ENCODE measurements at regions of chr11 and their contacts with region 1.

Region 1: GRCh38 chr11:1832211-1832919 is 2.4 kb upstream of the SYT8 start:
- DNase-seq: peak; percentile 76
- ATAC-seq: peak; percentile 77
- H3K4me3 ChIP-seq: no peak overlapping the region
- H3K4me3 Mint-ChIP-seq: no peak overlapping the region
- H3K27ac ChIP-seq: no peak overlapping the region
- H3K27ac Mint-ChIP-seq: no peak overlapping the region
- H3K4me1 ChIP-seq: peaks cover 4 to 9% of the 10 kb centered on the region in 2 donors
- H3K4me1 Mint-ChIP-seq: peaks cover 3% of the 10 kb centered on the region
- H3K27me3 ChIP-seq: peaks cover 0 to 28% (median 5%) of the 10 kb centered on the region in 4 experiments
- H3K27me3 Mint-ChIP-seq: peaks cover 8% of the 10 kb centered on the region
- CTCF ChIP-seq: peak; percentile 99

Region 2: GRCh38 chr11:975827-976226 is 856.5 kb before region 1 on chr11:
- CTCF ChIA-PET with region 1: no interaction called
- POLR2A ChIA-PET with region 1: no interaction called
- intact Hi-C with region 1: no loop called
- DNase-seq: no peak
- ATAC-seq: no peak
- H3K4me3 ChIP-seq: no peak overlapping the region
- H3K4me3 Mint-ChIP-seq: no peak overlapping the region
- H3K27ac ChIP-seq: no peak overlapping the region
- H3K27ac Mint-ChIP-seq: no peak overlapping the region
- H3K4me1 ChIP-seq: peaks cover 0 to 1% of the 10 kb centered on the region in 2 donors
- H3K4me1 Mint-ChIP-seq: peaks cover 4% of the 10 kb centered on the region
- H3K27me3 ChIP-seq: no peaks in the 10 kb centered on the region
- H3K27me3 Mint-ChIP-seq: no peaks in the 10 kb centered on the region
- CTCF ChIP-seq: no peak

Region 3: GRCh38 chr11:1652771-1653540 is 179.4 kb before region 1 on chr11:
- CTCF ChIA-PET with region 1: interaction called, 72 read pairs
- POLR2A ChIA-PET with region 1: no interaction called
- intact Hi-C with region 1: no loop called
- DNase-seq: peak; percentile 78
- ATAC-seq: peak; percentile 91
- H3K4me3 ChIP-seq: no peak overlapping the region
- H3K4me3 Mint-ChIP-seq: no peak overlapping the region
- H3K27ac ChIP-seq: no peak overlapping the region
- H3K27ac Mint-ChIP-seq: no peak overlapping the region
- H3K4me1 ChIP-seq: peaks cover 0 to 6% of the 10 kb centered on the region in 2 donors
- H3K4me1 Mint-ChIP-seq: no peaks in the 10 kb centered on the region
- H3K27me3 ChIP-seq: peaks cover 0 to 22% (median 4%) of the 10 kb centered on the region in 4 experiments
- H3K27me3 Mint-ChIP-seq: peaks cover 39% of the 10 kb centered on the region
- CTCF ChIP-seq: peak; percentile 97

Region 4: DNA sequence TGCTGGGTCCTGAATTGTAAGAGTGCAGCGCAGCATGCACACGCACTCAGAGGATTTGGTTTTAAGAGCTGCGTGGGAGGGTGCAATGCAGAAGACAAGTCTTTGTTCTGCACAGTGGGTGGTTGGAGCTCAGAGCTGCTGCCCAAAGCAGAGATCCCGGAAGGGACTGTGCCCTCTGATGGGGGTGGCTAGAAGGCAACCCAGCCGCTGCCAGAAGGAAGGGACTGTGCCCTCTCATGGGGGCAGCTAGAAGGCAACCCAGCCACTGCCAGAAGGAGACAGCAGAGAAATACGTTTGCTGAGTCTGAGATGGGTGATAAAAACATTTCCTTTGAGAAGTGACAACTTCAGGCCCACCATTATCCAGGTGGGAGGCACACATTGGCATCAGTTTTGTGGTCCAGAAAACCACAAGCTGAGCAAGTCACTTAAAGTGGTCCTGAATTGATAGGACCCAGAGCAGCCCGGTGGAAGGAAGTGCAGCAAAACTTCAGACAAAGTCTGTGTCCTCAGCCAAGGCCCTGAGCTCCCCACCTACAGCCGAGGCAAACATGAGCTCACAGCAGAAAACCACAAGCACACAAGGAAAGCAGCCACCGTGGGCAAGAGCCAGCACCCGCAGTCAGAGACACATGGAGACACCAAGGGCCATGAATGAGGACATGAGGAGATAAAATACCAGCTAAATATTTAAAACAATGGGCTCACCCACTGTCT is 131.1 kb before region 1 on chr11:
- CTCF ChIA-PET with region 1: interaction called, 18 read pairs
- POLR2A ChIA-PET with region 1: no interaction called
- intact Hi-C with region 1: no loop called
- DNase-seq: no peak
- ATAC-seq: no peak
- H3K4me3 ChIP-seq: no peak overlapping the region
- H3K4me3 Mint-ChIP-seq: no peak overlapping the region
- H3K27ac ChIP-seq: no peak overlapping the region
- H3K27ac Mint-ChIP-seq: no peak overlapping the region
- H3K4me1 ChIP-seq: peaks cover 11 to 18% of the 10 kb centered on the region in 2 donors
- H3K4me1 Mint-ChIP-seq: peaks cover 21% of the 10 kb centered on the region
- H3K27me3 ChIP-seq: peaks cover 0 to 9% (median 0%) of the 10 kb centered on the region in 4 experiments
- H3K27me3 Mint-ChIP-seq: peaks cover 23% of the 10 kb centered on the region
- CTCF ChIP-seq: no peak

Region 5: GRCh38 chr11:1782831-1783724 is 49.3 kb before region 1 on chr11:
- CTCF ChIA-PET with region 1: no interaction called
- POLR2A ChIA-PET with region 1: no interaction called
- intact Hi-C with region 1: no loop called
- DNase-seq: no peak
- ATAC-seq: no peak
- H3K4me3 ChIP-seq: no peak overlapping the region
- H3K4me3 Mint-ChIP-seq: no peak overlapping the region
- H3K27ac ChIP-seq: no peak overlapping the region
- H3K27ac Mint-ChIP-seq: no peak overlapping the region
- H3K4me1 ChIP-seq: peaks cover 0 to 10% of the 10 kb centered on the region in 2 donors
- H3K4me1 Mint-ChIP-seq: peaks cover 15% of the 10 kb centered on the region
- H3K27me3 ChIP-seq: no peaks in the 10 kb centered on the region
- H3K27me3 Mint-ChIP-seq: no peaks in the 10 kb centered on the region
- CTCF ChIP-seq: no peak

Region 6: GRCh38 chr11:1882519-1883238 is 50.3 kb after region 1 on chr11:
- CTCF ChIA-PET with region 1: interaction called, 23 read pairs
- POLR2A ChIA-PET with region 1: no interaction called
- intact Hi-C with region 1: loop called (anchors 1 kb)
- DNase-seq: peak; percentile 86
- ATAC-seq: peak; percentile 74
- H3K4me3 ChIP-seq: no peak overlapping the region
- H3K4me3 Mint-ChIP-seq: peak overlapping the region; percentile 34
- H3K27ac ChIP-seq: no peak overlapping the region
- H3K27ac Mint-ChIP-seq: peak overlapping the region; percentile 75
- H3K4me1 ChIP-seq: peaks cover 32 to 46% of the 10 kb centered on the region in 2 donors
- H3K4me1 Mint-ChIP-seq: peaks cover 38% of the 10 kb centered on the region
- H3K27me3 ChIP-seq: no peaks in the 10 kb centered on the region
- H3K27me3 Mint-ChIP-seq: no peaks in the 10 kb centered on the region
- CTCF ChIP-seq: peak; percentile 87

Region 7: GRCh38 chr11:1917671-1918516 is 85.5 kb after region 1 on chr11:
- CTCF ChIA-PET with region 1: interaction called, 15 read pairs
- POLR2A ChIA-PET with region 1: no interaction called
- intact Hi-C with region 1: no loop called
- DNase-seq: peak; percentile 31
- ATAC-seq: peak; percentile 40
- H3K4me3 ChIP-seq: no peak overlapping the region
- H3K4me3 Mint-ChIP-seq: no peak overlapping the region
- H3K27ac ChIP-seq: no peak overlapping the region
- H3K27ac Mint-ChIP-seq: no peak overlapping the region
- H3K4me1 ChIP-seq: peaks cover 0 to 5% of the 10 kb centered on the region in 2 donors
- H3K4me1 Mint-ChIP-seq: peaks cover 19% of the 10 kb centered on the region
- H3K27me3 ChIP-seq: peaks cover 0 to 13% (median 6%) of the 10 kb centered on the region in 4 experiments
- H3K27me3 Mint-ChIP-seq: peaks cover 21% of the 10 kb centered on the region
- CTCF ChIP-seq: peak; percentile 48

Region 8: DNA sequence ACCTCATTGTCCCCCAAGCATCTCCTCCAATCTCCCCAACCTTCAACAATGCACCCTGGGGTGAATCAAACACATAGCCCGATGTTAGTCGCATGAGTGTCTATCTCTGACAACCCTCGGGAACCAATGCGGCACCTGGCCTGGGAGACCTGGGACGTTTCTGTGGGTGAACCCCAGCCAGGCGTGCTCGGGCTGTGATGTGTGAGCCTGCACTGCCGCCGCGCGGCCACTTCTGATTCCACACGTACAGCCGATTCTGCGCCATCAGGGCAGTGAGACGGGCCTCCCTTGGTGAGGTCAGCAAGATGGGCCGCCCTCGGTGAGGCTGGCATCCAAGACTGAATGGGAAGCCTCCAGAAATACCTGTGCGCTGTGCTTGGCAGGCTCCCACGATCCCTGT is 170.4 kb after region 1 on chr11:
- CTCF ChIA-PET with region 1: interaction called, 79 read pairs
- POLR2A ChIA-PET with region 1: no interaction called
- intact Hi-C with region 1: no loop called
- DNase-seq: no peak
- ATAC-seq: peak; percentile 46
- H3K4me3 ChIP-seq: no peak overlapping the region
- H3K4me3 Mint-ChIP-seq: no peak overlapping the region
- H3K27ac ChIP-seq: no peak overlapping the region
- H3K27ac Mint-ChIP-seq: no peak overlapping the region
- H3K4me1 ChIP-seq: no peaks in the 10 kb centered on the region
- H3K4me1 Mint-ChIP-seq: no peaks in the 10 kb centered on the region
- H3K27me3 ChIP-seq: no peaks in the 10 kb centered on the region
- H3K27me3 Mint-ChIP-seq: no peaks in the 10 kb centered on the region
- CTCF ChIP-seq: no peak

Region 9: GRCh38 chr11:2269601-2270321 is 437.4 kb after region 1 on chr11:
- CTCF ChIA-PET with region 1: no interaction called
- POLR2A ChIA-PET with region 1: no interaction called
- intact Hi-C with region 1: no loop called
- DNase-seq: peak; percentile 80
- ATAC-seq: peak; percentile 34
- H3K4me3 ChIP-seq: peak overlapping the region; percentile 31 to 75 (median 52)
- H3K4me3 Mint-ChIP-seq: peak overlapping the region; percentile 84
- H3K27ac ChIP-seq: no peak overlapping the region
- H3K27ac Mint-ChIP-seq: peak overlapping the region; percentile 84
- H3K4me1 ChIP-seq: peaks cover 38 to 48% of the 10 kb centered on the region in 2 donors
- H3K4me1 Mint-ChIP-seq: peaks cover 41% of the 10 kb centered on the region
- H3K27me3 ChIP-seq: peaks cover 0 to 31% (median 9%) of the 10 kb centered on the region in 4 experiments
- H3K27me3 Mint-ChIP-seq: peaks cover 2% of the 10 kb centered on the region
- CTCF ChIP-seq: peak; percentile 36